Breast epithelium (tissue), 4 donors: ENCODE measurements at regions of chr11 and their contacts with region 1.

Region 1: GRCh38 chr11:56841210-56841810 is 92.8 kb upstream of the OR9G4 start:
- DNase-seq: peak in 1 of 2 donors; percentile 23
- H3K4me3 ChIP-seq: no peak overlapping the region
- H3K27ac ChIP-seq: no peak overlapping the region
- H3K4me1 ChIP-seq: no peaks in the 10 kb centered on the region
- H3K27me3 ChIP-seq: no peaks in the 10 kb centered on the region
- CTCF ChIP-seq: peak; percentile 33 to 75 (median 73)
- POLR2A ChIP-seq: no peak

Region 2: GRCh38 chr11:55819330-55819729 is 1022.0 kb before region 1 on chr11 and contains the start of gene OR5D18:
- intact Hi-C with region 1: no loop called
- DNase-seq: no peak
- H3K4me3 ChIP-seq: no peak within 1 kb of the TSS
- H3K27ac ChIP-seq: no peak within 1 kb of the TSS
- H3K4me1 ChIP-seq: no peaks in the 10 kb centered on the region
- H3K27me3 ChIP-seq: no peaks in the 10 kb centered on the region
- CTCF ChIP-seq: no peak
- POLR2A ChIP-seq: no peak
- total RNA-seq, gene OR5D18: not detected

Region 3: DNA sequence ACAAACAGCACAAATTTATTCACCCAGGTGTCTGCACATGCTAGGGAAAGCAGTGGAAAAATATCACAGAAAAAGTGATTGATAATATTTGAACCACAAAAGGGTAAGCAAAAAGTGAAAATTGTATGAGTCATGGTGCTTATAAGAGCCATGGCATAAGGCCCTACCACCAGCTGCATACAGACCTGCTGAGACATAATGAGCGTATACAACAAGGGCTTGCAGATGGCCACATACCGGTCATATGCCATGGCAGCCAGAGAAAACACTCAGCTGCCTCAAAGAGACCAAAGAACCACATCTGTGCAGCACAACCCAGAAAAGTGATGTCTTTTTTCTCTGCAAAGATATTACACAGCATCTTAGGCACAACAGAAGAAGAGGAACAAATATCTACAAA is 21.4 kb before region 1 on chr11:
- intact Hi-C with region 1: no loop called
- DNase-seq: no peak
- H3K4me3 ChIP-seq: no peak overlapping the region
- H3K27ac ChIP-seq: no peak overlapping the region
- H3K4me1 ChIP-seq: no peaks in the 10 kb centered on the region
- H3K27me3 ChIP-seq: no peaks in the 10 kb centered on the region
- CTCF ChIP-seq: no peak
- POLR2A ChIP-seq: no peak

Region 4: DNA sequence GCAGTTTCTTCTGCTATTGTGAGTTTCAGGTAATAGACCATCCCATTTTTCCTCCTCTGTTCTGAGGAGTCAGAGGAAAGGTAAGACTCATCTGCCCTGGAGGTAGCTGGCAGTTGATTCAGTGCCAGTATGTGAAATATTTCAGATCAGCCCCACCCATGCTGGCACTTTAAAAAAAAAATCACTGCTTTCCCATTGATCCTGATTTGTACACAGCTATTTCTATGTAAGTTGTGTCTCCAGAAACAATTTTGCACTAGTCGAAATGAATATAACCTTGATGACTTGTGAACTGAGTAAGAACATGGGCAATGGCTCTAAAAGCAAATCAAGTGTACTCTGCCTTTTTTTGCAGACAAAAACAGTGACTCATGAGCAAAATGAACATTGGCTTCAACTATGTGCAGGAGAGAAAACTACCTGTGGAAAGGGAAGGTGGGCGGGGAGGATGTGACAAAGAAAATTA is 65.4 kb after region 1 on chr11:
- intact Hi-C with region 1: loop called (anchors 2 kb)
- DNase-seq: no peak
- H3K4me3 ChIP-seq: no peak overlapping the region
- H3K27ac ChIP-seq: no peak overlapping the region
- H3K4me1 ChIP-seq: no peaks in the 10 kb centered on the region
- H3K27me3 ChIP-seq: no peaks in the 10 kb centered on the region
- CTCF ChIP-seq: no peak
- POLR2A ChIP-seq: no peak

Region 5: DNA sequence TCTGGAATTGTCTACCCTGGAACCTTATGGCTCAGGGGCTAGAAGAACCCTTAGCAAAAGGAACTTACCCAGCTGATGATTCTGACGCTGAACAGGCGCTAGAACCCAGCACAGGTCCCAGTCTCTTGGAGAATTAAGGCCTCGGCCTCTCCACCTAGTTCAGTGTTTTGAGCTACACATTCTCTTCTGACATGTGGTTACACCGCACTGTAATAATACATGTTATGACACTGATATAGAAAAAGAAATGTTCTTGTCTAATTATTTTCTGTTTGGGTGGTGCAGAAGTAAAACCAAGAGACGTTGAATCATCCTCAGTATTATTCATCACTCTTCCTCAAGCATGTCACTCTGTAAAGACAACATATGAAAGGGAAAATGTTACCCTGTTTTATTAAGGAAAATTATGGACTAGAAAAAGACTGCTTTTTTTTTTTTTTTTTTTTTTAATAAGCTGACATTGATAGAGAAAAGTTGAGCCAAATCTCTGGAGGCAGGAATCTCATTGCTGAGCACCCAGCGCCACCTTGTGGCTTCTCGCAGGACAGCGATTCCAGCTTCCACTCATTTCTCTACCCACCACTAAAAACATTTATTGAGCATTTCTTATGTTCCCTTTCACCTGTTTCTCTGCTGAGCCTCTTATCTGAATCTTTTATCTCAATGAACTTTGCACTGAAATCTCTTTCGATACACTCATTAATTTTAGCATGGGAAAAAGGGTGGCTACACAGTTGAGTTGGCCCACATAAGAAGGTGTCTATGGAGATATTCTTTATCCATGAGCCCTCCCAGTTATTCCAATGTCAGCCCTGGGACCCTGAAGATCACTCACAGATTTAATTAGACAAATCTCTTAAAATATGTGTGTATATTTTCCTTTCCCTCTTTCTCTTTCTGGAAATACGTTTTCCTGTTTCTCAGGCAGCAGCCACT is 408.3 kb after region 1 on chr11:
- intact Hi-C with region 1: loop called (anchors 10 kb)
- DNase-seq: peak in 1 of 2 donors; percentile 54
- H3K4me3 ChIP-seq: no peak overlapping the region
- H3K27ac ChIP-seq: peak overlapping the region in 1 of 2 donors; percentile 9
- H3K4me1 ChIP-seq: peaks cover 0 to 8% of the 10 kb centered on the region in 2 donors
- H3K27me3 ChIP-seq: no peaks in the 10 kb centered on the region
- CTCF ChIP-seq: peak; percentile 70 to 86 (median 75)
- POLR2A ChIP-seq: no peak